Common myeloid progenitor, CD34-positive (primary cell): ENCODE measurements at regions of chr17 and their contacts with region 1.

Region 1: GRCh38 chr17:8222630-8223356 is 12.4 kb upstream of the AURKB start:
- DNase-seq: peak; percentile 91 to 97 (median 96)
- H3K4me3 ChIP-seq: peak overlapping the region; percentile 53 to 98 (median 86)
- H3K27ac ChIP-seq: peak overlapping the region; percentile 87 to 98
- H3K4me1 ChIP-seq: peaks cover 2 to 38% (median 30%) of the 10 kb centered on the region in 4 experiments
- H3K27me3 ChIP-seq: no peaks in the 10 kb centered on the region

Region 2: DNA sequence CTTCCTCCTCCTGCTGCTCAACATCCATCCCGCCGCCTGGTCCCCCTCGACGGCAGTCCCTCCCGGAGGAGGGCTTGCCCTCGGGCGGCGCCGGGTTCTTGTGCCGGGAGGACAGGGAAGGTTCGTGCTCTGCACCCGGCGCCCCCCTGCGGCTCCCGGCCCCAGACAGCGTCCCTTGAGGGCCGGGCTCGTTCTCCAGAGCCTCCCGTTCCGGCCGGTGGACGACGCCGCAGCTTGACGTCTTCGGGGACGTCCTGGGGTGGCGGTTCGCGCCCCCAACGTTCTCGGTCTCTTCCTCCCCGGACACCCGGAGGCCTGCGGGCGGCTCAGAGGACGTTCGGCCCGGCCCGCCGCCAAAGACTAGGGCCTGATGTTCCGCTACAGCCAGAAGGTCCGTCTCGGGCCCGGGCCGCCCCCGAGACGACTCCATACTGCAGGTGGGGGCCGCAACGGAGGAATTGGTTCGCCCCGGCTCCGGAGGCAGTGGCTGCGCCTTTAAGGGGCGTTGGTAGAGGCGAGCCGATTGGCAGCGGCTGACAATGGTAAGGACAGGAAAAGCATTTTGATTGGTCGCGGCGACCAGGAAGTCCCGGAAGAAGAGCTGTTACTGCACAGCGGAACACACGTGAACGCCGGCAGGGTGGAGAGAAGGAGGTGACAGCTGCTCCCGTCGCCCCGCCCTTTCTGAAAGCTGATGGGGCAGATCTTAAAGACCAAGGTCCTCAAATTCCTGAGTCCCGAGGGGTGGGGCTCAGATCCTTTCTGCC is 32.9 kb before region 1 on chr17 and contains the start of gene BORCS6:
- CTCF ChIA-PET with region 1: interaction called, 13 read pairs
- POLR2A ChIA-PET with region 1: interaction called, 56 read pairs
- DNase-seq: peak; percentile 97 to 99 (median 98)
- H3K4me3 ChIP-seq: peak within 1 kb of the TSS; percentile 75 to 92 (median 80)
- H3K27ac ChIP-seq: peak within 1 kb of the TSS in 1 of 2 experiments; percentile 81
- H3K4me1 ChIP-seq: peaks cover 15 to 53% (median 46%) of the 10 kb centered on the region in 4 experiments
- H3K27me3 ChIP-seq: no peaks in the 10 kb centered on the region

Region 3: GRCh38 chr17:8209909-8210760 is 12.7 kb before region 1 on chr17 and contains the start of gene AURKB:
- CTCF ChIA-PET with region 1: interaction called, 17 read pairs
- POLR2A ChIA-PET with region 1: interaction called, 5 read pairs
- DNase-seq: peak; percentile 94 to 98 (median 96)
- H3K4me3 ChIP-seq: peak within 1 kb of the TSS; percentile 60 to 95 (median 86)
- H3K27ac ChIP-seq: peak within 1 kb of the TSS; percentile 64 to 84
- H3K4me1 ChIP-seq: peaks cover 4 to 33% (median 19%) of the 10 kb centered on the region in 4 experiments
- H3K27me3 ChIP-seq: no peaks in the 10 kb centered on the region

Region 4: DNA sequence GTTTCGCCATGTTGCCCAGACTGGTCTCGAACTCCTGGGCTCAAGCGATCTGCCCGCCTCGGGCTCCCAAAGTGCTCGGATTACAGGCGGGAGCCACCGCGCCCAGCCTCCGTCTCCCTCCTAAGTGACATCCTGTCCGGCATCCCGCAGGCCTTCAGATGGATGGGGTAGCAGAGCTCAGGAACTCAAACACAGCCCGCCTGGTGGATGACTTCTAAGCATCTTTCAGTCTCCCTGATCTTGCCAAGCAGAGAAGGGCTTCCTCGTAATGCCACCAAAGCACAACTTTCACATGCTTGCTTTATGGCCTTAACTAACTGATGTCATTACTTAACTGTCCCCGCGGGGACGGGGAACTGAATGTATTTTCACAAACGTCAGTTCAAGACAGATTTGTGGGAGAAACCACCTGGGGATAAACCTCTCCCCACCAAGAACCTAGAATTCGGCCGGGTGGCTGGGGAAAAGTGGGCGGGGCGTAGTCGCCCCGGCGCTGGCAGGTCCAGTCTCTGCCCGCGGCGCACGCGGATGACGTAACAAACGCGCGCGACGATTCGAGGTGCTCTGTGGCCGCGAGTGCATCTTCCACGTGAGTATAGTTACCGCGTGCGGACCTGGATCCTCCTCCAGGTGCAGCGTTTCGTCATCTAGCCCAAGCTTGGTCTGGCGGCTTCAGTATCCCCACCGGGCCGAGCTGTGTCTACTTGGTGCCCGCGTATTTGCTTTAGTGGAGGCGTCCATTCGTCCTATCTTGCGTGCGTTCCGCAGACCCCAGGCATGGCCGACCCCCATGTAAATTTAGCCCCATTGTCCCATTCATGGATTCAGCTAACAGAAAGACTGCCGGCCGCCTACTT is 26.2 kb after region 1 on chr17 and contains the start of gene PFAS:
- CTCF ChIA-PET with region 1: interaction called, 55 read pairs
- POLR2A ChIA-PET with region 1: interaction called, 30 read pairs
- DNase-seq: peak; percentile 95 to 97 (median 97)
- H3K4me3 ChIP-seq: peak within 1 kb of the TSS; percentile 91 to 99 (median 95)
- H3K27ac ChIP-seq: peak within 1 kb of the TSS; percentile 98
- H3K4me1 ChIP-seq: peaks cover 8 to 26% (median 22%) of the 10 kb centered on the region in 4 experiments
- H3K27me3 ChIP-seq: no peaks in the 10 kb centered on the region

Region 5: GRCh38 chr17:8435245-8436168 is 212.7 kb after region 1 on chr17 and contains the start of gene NDEL1:
- CTCF ChIA-PET with region 1: no interaction called
- POLR2A ChIA-PET with region 1: no interaction called
- DNase-seq: peak; percentile 97 to 98 (median 98)
- H3K4me3 ChIP-seq: peak within 1 kb of the TSS; percentile 76 to 99 (median 94)
- H3K27ac ChIP-seq: peak within 1 kb of the TSS; percentile 90 to 97
- H3K4me1 ChIP-seq: peaks cover 3 to 19% (median 10%) of the 10 kb centered on the region in 4 experiments
- H3K27me3 ChIP-seq: no peaks in the 10 kb centered on the region